B cell (primary cell): ENCODE measurements at regions of chr1 and their contacts with region 1.

Region 1: DNA sequence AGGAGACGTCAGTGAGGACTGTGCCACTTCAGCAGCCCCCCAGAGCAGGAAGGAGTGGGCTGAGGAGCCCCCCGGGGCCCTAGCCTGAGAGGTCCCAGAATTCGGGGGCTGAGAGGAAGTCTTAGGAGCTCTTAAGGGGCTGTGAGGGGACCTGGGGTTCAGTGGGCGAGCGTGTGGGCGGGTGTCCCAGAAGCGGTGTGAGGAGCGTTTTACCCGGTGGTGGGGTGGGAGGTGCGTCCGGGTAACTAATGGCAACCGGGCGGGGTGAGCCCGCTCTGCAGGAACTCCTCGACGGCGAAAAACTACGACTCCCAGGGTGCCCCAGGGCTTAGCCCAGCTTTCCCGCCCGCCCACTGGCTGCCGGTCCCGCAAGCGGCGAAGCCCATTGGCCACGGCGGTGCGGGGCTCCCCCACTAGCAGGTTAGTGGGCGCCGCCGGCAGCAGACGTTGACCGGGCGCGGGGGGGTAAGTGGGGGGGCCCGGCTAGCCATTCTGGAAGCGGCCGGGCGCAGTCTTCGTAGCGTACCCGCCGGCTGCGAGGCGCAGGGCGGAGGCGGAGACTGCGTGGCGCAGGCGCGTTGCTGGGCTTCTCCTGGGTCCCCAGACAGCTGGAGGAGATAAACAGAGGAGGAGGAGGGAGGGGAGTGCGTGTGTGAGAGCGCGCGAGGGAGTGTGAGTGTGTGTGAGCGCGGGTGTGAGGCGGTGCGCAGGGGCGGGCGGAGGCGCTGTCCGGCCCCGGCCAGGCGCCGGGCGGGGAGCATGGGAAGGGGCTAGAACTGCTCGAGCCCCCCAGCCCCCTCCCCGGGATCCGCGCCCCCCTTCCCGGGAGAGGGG is at the start of gene WDTC1:
- DNase-seq: peak; percentile 99
- ATAC-seq: peak; percentile 90
- H3K4me3 ChIP-seq: peak within 1 kb of the TSS; percentile 58 to 77 (median 75)
- H3K4me3 Mint-ChIP-seq: peak within 1 kb of the TSS; percentile 97
- H3K27ac ChIP-seq: peak within 1 kb of the TSS; percentile 38 to 83
- H3K27ac Mint-ChIP-seq: peak within 1 kb of the TSS; percentile 98
- H3K4me1 ChIP-seq: peaks cover 18 to 26% of the 10 kb centered on the region in 2 donors
- H3K4me1 Mint-ChIP-seq: peaks cover 33% of the 10 kb centered on the region
- H3K27me3 ChIP-seq: no peaks in the 10 kb centered on the region
- H3K27me3 Mint-ChIP-seq: no peaks in the 10 kb centered on the region
- CTCF ChIP-seq: no peak
- total RNA-seq, gene WDTC1: 69.1 and 70.9 TPM in 2 replicates

Region 2: GRCh38 chr1:27192039-27192529 is 42.2 kb before region 1 on chr1:
- CTCF ChIA-PET with region 1: interaction called, 10 read pairs
- POLR2A ChIA-PET with region 1: interaction called, 3 read pairs
- intact Hi-C with region 1: no loop called
- DNase-seq: no peak
- ATAC-seq: no peak
- H3K4me3 ChIP-seq: no peak overlapping the region
- H3K4me3 Mint-ChIP-seq: no peak overlapping the region
- H3K27ac ChIP-seq: no peak overlapping the region
- H3K27ac Mint-ChIP-seq: no peak overlapping the region
- H3K4me1 ChIP-seq: no peaks in the 10 kb centered on the region
- H3K4me1 Mint-ChIP-seq: no peaks in the 10 kb centered on the region
- H3K27me3 ChIP-seq: no peaks in the 10 kb centered on the region
- H3K27me3 Mint-ChIP-seq: no peaks in the 10 kb centered on the region
- CTCF ChIP-seq: no peak

Region 3: GRCh38 chr1:27284425-27285273 is 50.4 kb after region 1 on chr1:
- CTCF ChIA-PET with region 1: interaction called, 9 read pairs
- POLR2A ChIA-PET with region 1: interaction called, 5 read pairs
- intact Hi-C with region 1: loop called (anchors 2 kb)
- DNase-seq: peak; percentile 88
- ATAC-seq: peak; percentile 93
- H3K4me3 ChIP-seq: no peak overlapping the region
- H3K4me3 Mint-ChIP-seq: no peak overlapping the region
- H3K27ac ChIP-seq: peak overlapping the region in 1 of 2 donors; percentile 47
- H3K27ac Mint-ChIP-seq: no peak overlapping the region
- H3K4me1 ChIP-seq: peaks cover 0 to 9% of the 10 kb centered on the region in 2 donors
- H3K4me1 Mint-ChIP-seq: peaks cover 12% of the 10 kb centered on the region
- H3K27me3 ChIP-seq: no peaks in the 10 kb centered on the region
- H3K27me3 Mint-ChIP-seq: no peaks in the 10 kb centered on the region
- CTCF ChIP-seq: peak; percentile 87

Region 4: DNA sequence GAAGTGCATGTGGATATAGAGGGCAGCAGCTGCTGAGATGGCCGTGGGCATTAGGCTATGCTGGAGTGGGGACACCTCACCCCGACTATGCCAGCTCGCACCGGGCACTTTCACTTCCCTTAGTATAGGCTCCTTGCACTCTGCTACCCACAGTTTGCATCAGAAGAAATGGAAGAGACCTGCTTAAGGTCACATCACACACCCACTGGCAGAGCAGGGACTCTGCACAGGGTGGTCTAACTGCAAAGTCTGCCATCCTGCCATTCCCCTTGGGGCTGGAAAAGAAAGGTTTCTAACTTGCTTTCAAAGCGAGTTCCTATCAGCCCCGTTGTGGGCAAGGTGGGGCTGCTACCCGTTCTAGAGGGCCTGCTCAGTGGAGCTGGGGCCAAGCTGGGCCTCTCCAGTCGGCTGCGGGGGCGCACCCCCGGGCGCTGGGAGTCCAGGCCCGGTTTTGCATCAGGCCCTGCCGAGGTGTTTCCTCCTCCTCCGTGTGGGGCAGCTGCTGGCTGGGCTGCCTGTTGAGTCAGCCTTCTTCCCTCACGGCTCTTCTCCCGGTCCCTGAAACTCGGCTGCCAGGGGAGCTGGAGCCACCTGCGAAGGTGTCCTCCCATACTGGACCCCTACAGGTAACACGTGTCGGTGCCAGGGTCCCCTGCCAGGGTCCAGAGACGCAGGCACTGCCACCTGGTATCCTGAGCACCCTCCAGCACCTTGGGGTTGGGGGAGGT is 107.4 kb after region 1 on chr1 and contains the start of gene SYTL1:
- CTCF ChIA-PET with region 1: no interaction called
- POLR2A ChIA-PET with region 1: no interaction called
- intact Hi-C with region 1: no loop called
- DNase-seq: peak; percentile 89
- ATAC-seq: peak; percentile 78
- H3K4me3 ChIP-seq: peak within 1 kb of the TSS; percentile 61 to 89 (median 79)
- H3K4me3 Mint-ChIP-seq: peak within 1 kb of the TSS; percentile 96
- H3K27ac ChIP-seq: peak within 1 kb of the TSS; percentile 85 to 88
- H3K27ac Mint-ChIP-seq: peak within 1 kb of the TSS; percentile 98
- H3K4me1 ChIP-seq: peaks cover 37 to 59% of the 10 kb centered on the region in 2 donors
- H3K4me1 Mint-ChIP-seq: peaks cover 64% of the 10 kb centered on the region
- H3K27me3 ChIP-seq: no peaks in the 10 kb centered on the region
- H3K27me3 Mint-ChIP-seq: no peaks in the 10 kb centered on the region
- CTCF ChIP-seq: no peak
- total RNA-seq, gene SYTL1: 156 and 159 TPM in 2 replicates

Region 5: GRCh38 chr1:27392096-27392777 is 158.0 kb after region 1 on chr1 and contains the start of gene GPR3:
- CTCF ChIA-PET with region 1: interaction called, 3 read pairs
- POLR2A ChIA-PET with region 1: no interaction called
- intact Hi-C with region 1: loop called (anchors 10 kb)
- DNase-seq: peak; percentile 96
- ATAC-seq: peak; percentile 91
- H3K4me3 ChIP-seq: peak within 1 kb of the TSS in 4 of 5 experiments; percentile 34 to 60 (median 56)
- H3K4me3 Mint-ChIP-seq: peak within 1 kb of the TSS; percentile 81
- H3K27ac ChIP-seq: peak within 1 kb of the TSS in 1 of 2 donors; percentile 50
- H3K27ac Mint-ChIP-seq: peak within 1 kb of the TSS; percentile 67
- H3K4me1 ChIP-seq: peaks cover 12 to 24% of the 10 kb centered on the region in 2 donors
- H3K4me1 Mint-ChIP-seq: peaks cover 22% of the 10 kb centered on the region
- H3K27me3 ChIP-seq: no peaks in the 10 kb centered on the region
- H3K27me3 Mint-ChIP-seq: peaks cover 3% of the 10 kb centered on the region
- CTCF ChIP-seq: peak; percentile 65
- total RNA-seq, gene GPR3: not detected in 2 replicates